Thyroid gland (tissue), 4 donors: ENCODE measurements at regions of chr1 and their contacts with region 1.

Region 1: DNA sequence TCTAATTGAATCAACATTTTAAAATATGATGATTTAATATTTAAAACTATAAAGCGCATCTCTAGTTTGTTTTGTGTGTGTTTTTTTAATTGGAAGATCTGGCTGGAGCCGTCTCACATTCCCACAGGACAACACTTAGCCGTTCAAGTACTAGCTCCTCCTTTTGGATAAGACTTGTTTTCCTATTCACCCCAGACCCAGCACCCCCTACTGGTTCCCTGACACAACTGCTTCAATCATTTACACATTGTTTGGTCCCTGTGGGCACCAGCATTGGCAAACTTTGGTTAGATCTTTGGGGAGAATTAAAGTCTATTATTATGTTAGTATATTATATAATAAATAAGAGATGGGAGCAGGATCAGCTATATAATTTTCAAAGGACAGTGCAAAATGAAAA is 34.5 kb downstream of the TYW3 start:
- DNase-seq: no peak
- H3K4me3 ChIP-seq: no peak overlapping the region
- H3K27ac ChIP-seq: no peak overlapping the region
- H3K4me1 ChIP-seq: no peaks in the 10 kb centered on the region
- H3K27me3 ChIP-seq: no peaks in the 10 kb centered on the region
- CTCF ChIP-seq: peak in 1 of 6 experiments; percentile 28
- POLR2A ChIP-seq: no peak

Region 2: DNA sequence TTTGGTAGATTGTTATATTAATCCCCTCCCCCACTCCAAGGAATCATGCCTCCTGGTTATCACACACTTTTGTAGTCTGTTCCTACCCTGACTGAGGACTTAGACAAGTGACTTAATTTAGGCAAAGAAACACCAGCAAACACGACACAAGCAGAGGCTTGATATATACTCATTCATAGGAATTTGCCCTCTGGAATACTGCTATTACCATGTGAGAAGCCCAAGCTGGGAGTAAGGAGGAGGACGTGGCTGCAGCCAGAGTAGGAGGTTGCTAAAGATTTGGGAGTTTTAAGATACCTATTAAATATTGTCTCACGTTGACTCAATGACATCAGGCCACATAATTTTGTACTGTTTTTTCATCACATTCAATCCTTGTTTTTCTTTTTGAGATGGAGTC is 355.2 kb before region 1 on chr1:
- intact Hi-C with region 1: no loop called
- DNase-seq: no peak
- H3K4me3 ChIP-seq: no peak overlapping the region
- H3K27ac ChIP-seq: no peak overlapping the region
- H3K4me1 ChIP-seq: no peaks in the 10 kb centered on the region
- H3K27me3 ChIP-seq: no peaks in the 10 kb centered on the region
- CTCF ChIP-seq: no peak
- POLR2A ChIP-seq: no peak

Region 3: DNA sequence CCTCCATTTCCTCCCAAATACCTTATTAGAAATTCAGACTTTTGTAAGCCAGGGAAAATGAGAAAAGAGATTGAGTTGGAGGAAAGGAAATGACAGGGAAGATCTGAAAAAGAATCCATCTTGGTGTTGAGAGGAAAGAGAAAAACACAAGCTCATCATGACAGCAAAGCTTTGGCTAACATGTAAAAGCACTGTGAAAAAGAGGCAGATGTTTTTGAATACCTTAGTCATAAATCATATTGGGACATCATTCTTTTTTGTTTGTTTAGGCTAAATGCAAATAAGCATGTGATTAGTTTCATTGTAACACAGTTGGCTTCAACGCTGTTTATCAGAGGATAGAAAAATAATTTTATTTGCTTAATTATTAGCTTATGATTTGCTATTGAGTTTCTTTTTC is 431.3 kb after region 1 on chr1:
- intact Hi-C with region 1: loop called (anchors 5 kb)
- DNase-seq: no peak
- H3K4me3 ChIP-seq: no peak overlapping the region
- H3K27ac ChIP-seq: no peak overlapping the region
- H3K4me1 ChIP-seq: no peaks in the 10 kb centered on the region
- H3K27me3 ChIP-seq: no peaks in the 10 kb centered on the region
- CTCF ChIP-seq: no peak
- POLR2A ChIP-seq: no peak